ENCODE measurements at regions of chr17 and their contacts with region 1.

Region 1: GRCh38 chr17:57783106-57783742 is 38.1 kb upstream of the CCDC182 start:
- DNase-seq: peak; percentile 98
- H3K4me3 ChIP-seq: peak overlapping the region in 1 of 2 experiments; percentile 55; a peak in 2 of 4 replicates
- H3K27ac ChIP-seq: peak overlapping the region in 1 of 2 experiments; percentile 99; a peak in 2 of 4 replicates
- H3K4me1 ChIP-seq: peaks cover 0 to 40% of the 10 kb centered on the region in 2 experiments; a peak in 3 of 4 replicates
- H3K27me3 ChIP-seq: peaks cover 22% of the 10 kb centered on the region
- CTCF ChIP-seq: peak; percentile 94
- EP300 ChIP-seq: peak in 1 of 2 experiments; percentile 65; a peak in 2 of 4 replicates
- RAD21 ChIP-seq: peak; percentile 97

Region 2: GRCh38 chr17:57106107-57106835 is 677.0 kb before region 1 on chr17:
- CTCF ChIA-PET with region 1: interaction called, 13 read pairs
- POLR2A ChIA-PET with region 1: no interaction called
- DNase-seq: peak; percentile 52
- H3K4me3 ChIP-seq: no peak overlapping the region
- H3K27ac ChIP-seq: no peak overlapping the region
- H3K4me1 ChIP-seq: peaks cover 0 to 18% of the 10 kb centered on the region in 2 experiments; a peak in 1 of 4 replicates
- H3K27me3 ChIP-seq: no peaks in the 10 kb centered on the region
- CTCF ChIP-seq: no peak; the same call in 1 of the 2 replicates
- EP300 ChIP-seq: no peak
- RAD21 ChIP-seq: 0 out of 2 replicates have a peak, but pooled peaks have one; percentile 23

Region 3: DNA sequence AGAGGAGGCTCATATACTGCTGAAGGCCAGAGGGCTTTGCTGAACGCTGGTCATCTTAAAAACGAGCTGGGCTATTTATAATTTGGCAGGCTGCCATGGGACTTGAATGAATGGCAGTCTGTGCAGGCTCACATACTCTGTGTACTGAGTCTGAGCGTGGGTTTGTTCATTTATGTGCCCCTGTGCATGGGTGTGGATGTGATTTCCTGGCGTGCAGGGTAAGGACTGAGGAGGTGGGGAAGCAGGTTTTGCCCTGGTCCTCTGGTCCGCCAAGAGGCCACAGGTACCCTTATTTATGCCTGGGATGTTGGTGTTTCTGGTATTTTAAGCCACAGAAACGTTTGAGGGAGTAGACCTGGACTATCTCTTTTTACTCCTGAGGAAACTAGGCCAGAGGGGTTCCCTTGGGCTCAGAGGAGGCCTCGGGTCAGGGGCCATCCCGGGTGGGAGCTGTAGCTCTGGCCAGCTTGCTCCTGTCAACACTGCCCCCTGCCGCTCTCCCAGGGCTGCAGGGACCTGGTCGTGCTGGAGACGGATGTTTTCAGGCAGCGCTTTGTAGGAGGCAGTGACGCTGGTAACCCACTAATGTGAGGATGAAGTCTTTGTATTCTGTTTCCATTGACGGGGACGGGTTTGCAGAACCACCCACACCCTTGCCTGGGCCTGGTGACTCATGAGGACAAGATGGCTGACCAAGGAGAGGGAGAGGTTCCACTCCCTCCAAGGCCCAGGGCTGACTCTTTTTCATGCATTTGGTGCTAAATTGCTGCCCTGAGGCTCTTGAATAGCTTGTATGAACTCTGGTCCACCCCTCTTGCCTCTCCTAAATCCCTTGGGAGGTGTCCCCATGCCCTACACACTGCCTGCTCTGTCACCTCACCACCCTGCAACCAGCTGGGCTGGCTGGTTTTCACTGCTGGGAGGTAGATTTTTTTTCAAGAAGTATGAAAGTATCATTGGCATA is 342.4 kb before region 1 on chr17:
- CTCF ChIA-PET with region 1: interaction called, 22 read pairs
- POLR2A ChIA-PET with region 1: interaction called, 5 read pairs
- DNase-seq: peak; percentile 82
- H3K4me3 ChIP-seq: no peak overlapping the region
- H3K27ac ChIP-seq: peak overlapping the region; percentile 70 to 96
- H3K4me1 ChIP-seq: peaks cover 47 to 86% of the 10 kb centered on the region in 2 experiments
- H3K27me3 ChIP-seq: no peaks in the 10 kb centered on the region
- CTCF ChIP-seq: peak; percentile 53
- EP300 ChIP-seq: peak in 1 of 2 experiments; percentile 60; a peak in 1 of 4 replicates
- RAD21 ChIP-seq: peak; percentile 68

Region 4: DNA sequence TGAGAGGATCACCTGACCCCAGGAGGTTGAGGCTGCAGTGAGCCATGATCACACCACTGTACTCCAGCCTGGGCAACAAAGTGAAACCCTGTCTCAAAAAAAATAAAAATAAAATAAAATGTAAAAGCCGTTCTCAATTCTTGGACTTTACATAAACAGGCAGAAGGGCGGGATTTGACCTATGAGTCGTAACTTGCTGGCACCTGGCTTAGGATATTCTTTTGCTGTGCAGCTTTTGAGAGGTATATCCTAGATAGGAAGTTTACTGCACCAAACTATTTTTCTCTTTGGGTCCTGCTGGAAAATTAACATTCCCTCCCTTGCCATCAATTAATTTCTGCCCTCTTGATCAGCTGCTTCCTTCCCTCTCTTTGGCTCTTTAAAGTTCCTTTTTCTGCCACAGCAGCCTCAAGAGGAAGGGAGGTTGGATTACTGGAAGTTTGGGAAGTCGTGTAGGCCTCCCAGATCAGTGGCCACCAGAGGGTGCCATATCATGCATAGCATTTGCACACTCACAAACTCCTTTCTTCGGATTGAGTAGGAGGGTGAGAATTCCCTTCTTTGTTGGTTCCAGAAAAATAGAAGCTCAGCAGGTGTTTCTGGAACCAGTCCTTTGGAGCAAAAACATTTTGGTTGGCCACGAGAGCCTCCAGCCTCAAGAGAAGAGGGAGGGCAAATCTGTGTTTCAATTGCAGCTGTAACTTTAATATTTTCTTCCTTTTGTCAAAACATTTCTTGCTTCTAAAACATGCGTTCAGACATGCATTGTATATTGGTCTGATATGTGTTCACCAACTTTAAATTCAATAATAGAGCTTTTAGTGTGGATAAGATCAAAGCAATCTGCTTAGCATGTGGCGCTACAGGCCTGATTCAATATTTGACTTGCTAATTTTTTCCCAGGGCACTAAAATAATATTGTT is 185.4 kb before region 1 on chr17:
- CTCF ChIA-PET with region 1: interaction called, 129 read pairs
- POLR2A ChIA-PET with region 1: interaction called, 19 read pairs
- DNase-seq: peak; percentile 82
- H3K4me3 ChIP-seq: no peak overlapping the region; a peak in 1 of 4 replicates
- H3K27ac ChIP-seq: peak overlapping the region; percentile 48 to 99
- H3K4me1 ChIP-seq: peaks cover 5 to 87% of the 10 kb centered on the region in 2 experiments; a peak in 3 of 4 replicates
- H3K27me3 ChIP-seq: no peaks in the 10 kb centered on the region
- CTCF ChIP-seq: peak; percentile 99
- EP300 ChIP-seq: peak; percentile 46 to 99; a peak in 2 of 4 replicates
- RAD21 ChIP-seq: peak; percentile 87

Region 5: GRCh38 chr17:57685505-57686132 is 97.6 kb before region 1 on chr17:
- CTCF ChIA-PET with region 1: interaction called, 13 read pairs
- POLR2A ChIA-PET with region 1: no interaction called
- DNase-seq: no peak
- H3K4me3 ChIP-seq: no peak overlapping the region
- H3K27ac ChIP-seq: peak overlapping the region in 1 of 2 experiments; percentile 97; a peak in 2 of 4 replicates
- H3K4me1 ChIP-seq: peaks cover 0 to 32% of the 10 kb centered on the region in 2 experiments; a peak in 2 of 4 replicates
- H3K27me3 ChIP-seq: no peaks in the 10 kb centered on the region
- CTCF ChIP-seq: no peak
- EP300 ChIP-seq: no peak
- RAD21 ChIP-seq: no peak

Region 6: GRCh38 chr17:57772774-57773173 is 10.4 kb before region 1 on chr17:
- CTCF ChIA-PET with region 1: interaction called, 79 read pairs
- POLR2A ChIA-PET with region 1: no interaction called
- DNase-seq: no peak
- H3K4me3 ChIP-seq: no peak overlapping the region
- H3K27ac ChIP-seq: no peak overlapping the region
- H3K4me1 ChIP-seq: peaks cover 0 to 6% of the 10 kb centered on the region in 2 experiments; a peak in 1 of 4 replicates
- H3K27me3 ChIP-seq: peaks cover 44% of the 10 kb centered on the region
- CTCF ChIP-seq: no peak
- EP300 ChIP-seq: no peak
- RAD21 ChIP-seq: peak; percentile 58

Region 7: GRCh38 chr17:57995076-57995956 is 212.1 kb after region 1 on chr17:
- CTCF ChIA-PET with region 1: interaction called, 11 read pairs
- POLR2A ChIA-PET with region 1: no interaction called
- DNase-seq: peak; percentile 79
- H3K4me3 ChIP-seq: no peak overlapping the region
- H3K27ac ChIP-seq: peak overlapping the region; percentile 18 to 33; a peak in 3 of 4 replicates
- H3K4me1 ChIP-seq: peaks cover 0 to 13% of the 10 kb centered on the region in 2 experiments; a peak in 2 of 4 replicates
- H3K27me3 ChIP-seq: no peaks in the 10 kb centered on the region
- CTCF ChIP-seq: peak; percentile 87
- EP300 ChIP-seq: no peak
- RAD21 ChIP-seq: peak; percentile 97

Region 8: DNA sequence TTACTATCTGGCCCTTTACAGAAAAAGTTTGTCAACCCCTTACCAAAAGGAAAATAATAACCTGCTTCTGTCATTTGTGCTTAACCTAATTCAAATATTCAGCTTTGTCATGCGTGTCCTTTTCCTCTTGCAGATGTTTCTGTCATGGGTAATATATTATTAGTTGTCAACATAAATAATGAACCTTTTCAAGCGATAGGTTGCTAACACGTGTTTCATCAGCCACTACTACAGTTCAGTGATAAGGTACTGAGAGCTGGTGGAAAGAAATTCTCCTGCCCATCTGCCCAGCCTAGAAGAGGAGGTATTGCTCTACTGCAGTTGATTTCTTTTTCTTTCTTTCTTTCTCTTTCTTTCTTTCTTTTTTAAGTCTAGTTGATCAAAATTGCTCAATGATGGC is 235.8 kb after region 1 on chr17:
- CTCF ChIA-PET with region 1: no interaction called
- POLR2A ChIA-PET with region 1: no interaction called
- DNase-seq: no peak
- H3K4me3 ChIP-seq: no peak overlapping the region
- H3K27ac ChIP-seq: no peak overlapping the region
- H3K4me1 ChIP-seq: no peaks in the 10 kb centered on the region
- H3K27me3 ChIP-seq: no peaks in the 10 kb centered on the region; the same call in 1 of the 2 replicates
- CTCF ChIP-seq: no peak
- EP300 ChIP-seq: no peak
- RAD21 ChIP-seq: no peak

Measured in SK-N-SH (cell line).